ENCODE measurements at regions of chr20 and their contacts with region 1.

Region 1: DNA sequence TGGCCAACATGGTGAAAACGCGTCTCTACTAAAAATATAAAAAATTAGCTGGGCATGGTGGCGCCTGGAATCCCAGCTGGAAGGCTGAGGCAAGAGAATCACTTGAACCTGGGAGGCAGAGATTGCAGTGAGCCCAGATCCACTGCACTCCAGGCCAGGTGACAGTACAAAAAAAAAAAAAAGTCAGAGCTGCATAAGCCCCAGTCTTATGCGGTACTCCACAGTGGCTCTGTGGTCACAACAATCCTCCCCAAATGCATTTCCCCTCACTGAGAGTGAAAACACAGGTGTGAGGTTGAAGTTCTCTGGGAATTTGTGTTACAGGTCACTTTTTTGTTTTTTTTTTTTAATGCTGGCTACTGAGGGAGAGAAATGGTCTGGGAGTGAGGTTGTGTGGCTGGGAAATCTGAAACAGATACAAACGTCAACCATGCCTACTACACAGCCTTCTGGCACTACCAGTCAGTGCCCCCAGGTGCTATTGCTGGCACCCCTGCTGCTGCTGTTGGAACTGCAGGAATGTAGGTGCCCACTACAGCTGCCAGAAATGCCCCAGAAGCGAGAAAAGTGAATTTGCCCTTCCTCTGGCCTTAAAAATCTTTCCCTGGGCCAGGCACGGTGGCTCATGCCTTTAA is 5.7 kb downstream of the MRPS26 start:
- DNase-seq: no peak
- H3K4me3 ChIP-seq: no peak overlapping the region
- H3K27ac ChIP-seq: no peak overlapping the region
- H3K4me1 ChIP-seq: peaks cover 5% of the 10 kb centered on the region
- H3K27me3 ChIP-seq: no peaks in the 10 kb centered on the region
- CTCF ChIP-seq: no peak
- POLR2A ChIP-seq: no peak

Region 2: GRCh38 chr20:3068986-3069900 is 17.7 kb after region 1 on chr20:
- CTCF ChIA-PET with region 1: interaction called, 17 read pairs
- POLR2A ChIA-PET with region 1: interaction called, 3 read pairs
- dilution Hi-C with region 1: no loop called
- intact Hi-C with region 1: no loop called
- DNase-seq: no peak
- H3K4me3 ChIP-seq: no peak overlapping the region
- H3K27ac ChIP-seq: no peak overlapping the region
- H3K4me1 ChIP-seq: no peaks in the 10 kb centered on the region
- H3K27me3 ChIP-seq: peaks cover 1 to 7% of the 10 kb centered on the region in 2 experiments
- CTCF ChIP-seq: peak in 1 of 2 donors; percentile 4
- POLR2A ChIP-seq: no peak

Region 3: DNA sequence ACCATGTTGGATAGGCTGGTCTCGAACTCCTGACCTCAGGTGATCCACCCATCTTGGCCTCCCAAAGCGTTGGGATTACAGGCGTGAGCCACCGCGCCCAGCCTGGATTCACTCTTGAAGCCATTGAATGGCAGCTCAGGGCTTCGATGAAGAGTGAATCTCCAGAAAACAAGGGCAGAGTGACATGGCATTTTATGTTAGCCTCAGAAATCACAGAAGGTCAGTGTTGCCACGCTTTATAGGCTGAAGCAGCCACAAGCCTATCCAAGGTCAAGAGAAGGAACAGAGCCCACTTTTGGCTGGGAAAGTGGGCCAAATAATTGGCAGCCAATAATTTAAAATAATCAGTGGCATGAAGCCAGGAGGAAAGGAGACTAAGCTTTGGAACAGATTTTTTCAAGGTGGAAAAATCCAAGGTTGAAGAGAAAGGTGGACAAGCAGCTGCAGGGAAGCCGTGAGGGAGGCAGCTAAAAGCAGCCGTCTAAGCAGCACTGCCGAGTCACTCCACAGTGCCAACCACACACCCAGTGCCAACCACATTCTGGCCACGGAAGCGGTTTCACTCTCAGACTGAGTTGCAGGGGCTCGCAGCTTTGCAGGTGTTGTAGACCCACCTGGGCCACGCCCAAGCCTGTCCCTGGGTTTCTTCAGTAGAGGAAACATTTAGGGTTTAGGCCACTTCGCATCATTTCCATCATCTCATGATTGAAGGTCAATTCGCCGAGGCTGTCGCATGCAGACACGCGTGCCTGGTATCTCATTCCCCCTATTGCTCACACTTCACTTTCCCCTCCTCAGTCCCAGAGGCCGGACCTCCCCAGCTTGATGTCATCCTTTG is 50.5 kb after region 1 on chr20:
- CTCF ChIA-PET with region 1: interaction called, 16 read pairs
- POLR2A ChIA-PET with region 1: no interaction called
- dilution Hi-C with region 1: no loop called
- intact Hi-C with region 1: no loop called
- DNase-seq: no peak
- H3K4me3 ChIP-seq: no peak overlapping the region
- H3K27ac ChIP-seq: no peak overlapping the region
- H3K4me1 ChIP-seq: no peaks in the 10 kb centered on the region
- H3K27me3 ChIP-seq: no peaks in the 10 kb centered on the region
- CTCF ChIP-seq: no peak
- POLR2A ChIP-seq: no peak

Region 4: DNA sequence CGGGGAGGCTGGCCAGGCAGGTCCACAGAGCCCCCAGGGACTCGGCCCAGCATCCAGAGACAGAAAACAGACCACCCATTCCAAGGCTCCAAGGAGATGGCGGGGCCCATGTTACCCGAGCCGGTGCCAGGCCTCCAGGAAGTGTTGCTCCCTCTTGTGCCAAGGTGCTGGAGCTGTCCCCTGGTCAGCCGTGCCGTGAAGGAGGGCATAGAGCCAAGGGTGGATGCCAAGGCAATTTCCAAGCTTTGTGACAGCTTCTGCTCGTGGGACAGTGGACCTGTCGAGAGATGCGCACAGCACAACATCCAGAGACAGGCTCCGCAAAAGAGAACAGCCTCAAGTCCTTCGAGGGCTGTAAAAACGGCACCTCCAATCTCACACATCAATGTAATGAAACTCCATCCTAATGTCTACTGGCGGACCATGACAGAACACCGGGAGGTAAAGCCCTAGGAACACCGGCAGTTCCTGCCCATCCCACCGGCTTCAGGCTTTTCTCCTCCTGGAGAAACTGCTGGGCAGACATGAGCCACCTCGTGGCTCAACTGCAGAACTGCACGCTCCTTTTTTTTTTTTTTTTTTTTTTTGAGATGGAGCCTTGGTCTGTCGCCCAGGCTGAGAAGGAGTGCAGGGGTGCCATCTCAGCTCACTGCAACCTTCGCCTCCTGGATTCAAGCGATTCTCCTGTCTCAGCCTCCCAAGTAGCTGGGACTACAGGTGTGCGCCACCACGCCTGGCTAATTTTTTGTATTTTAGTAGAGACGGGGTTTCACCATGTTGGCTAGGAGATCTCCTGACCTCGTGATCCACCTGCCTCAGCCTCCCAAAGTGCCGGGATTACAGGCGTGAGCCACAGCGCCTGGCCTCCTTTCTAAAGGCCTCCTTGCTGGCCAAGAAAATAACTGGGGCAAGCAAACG is 63.9 kb after region 1 on chr20:
- CTCF ChIA-PET with region 1: interaction called, 59 read pairs
- POLR2A ChIA-PET with region 1: no interaction called
- dilution Hi-C with region 1: no loop called
- intact Hi-C with region 1: loop called (anchors 1 kb)
- DNase-seq: peak; percentile 44
- H3K4me3 ChIP-seq: no peak overlapping the region
- H3K27ac ChIP-seq: no peak overlapping the region
- H3K4me1 ChIP-seq: no peaks in the 10 kb centered on the region
- H3K27me3 ChIP-seq: no peaks in the 10 kb centered on the region
- CTCF ChIP-seq: peak; percentile 64 to 76
- POLR2A ChIP-seq: no peak

Region 5: DNA sequence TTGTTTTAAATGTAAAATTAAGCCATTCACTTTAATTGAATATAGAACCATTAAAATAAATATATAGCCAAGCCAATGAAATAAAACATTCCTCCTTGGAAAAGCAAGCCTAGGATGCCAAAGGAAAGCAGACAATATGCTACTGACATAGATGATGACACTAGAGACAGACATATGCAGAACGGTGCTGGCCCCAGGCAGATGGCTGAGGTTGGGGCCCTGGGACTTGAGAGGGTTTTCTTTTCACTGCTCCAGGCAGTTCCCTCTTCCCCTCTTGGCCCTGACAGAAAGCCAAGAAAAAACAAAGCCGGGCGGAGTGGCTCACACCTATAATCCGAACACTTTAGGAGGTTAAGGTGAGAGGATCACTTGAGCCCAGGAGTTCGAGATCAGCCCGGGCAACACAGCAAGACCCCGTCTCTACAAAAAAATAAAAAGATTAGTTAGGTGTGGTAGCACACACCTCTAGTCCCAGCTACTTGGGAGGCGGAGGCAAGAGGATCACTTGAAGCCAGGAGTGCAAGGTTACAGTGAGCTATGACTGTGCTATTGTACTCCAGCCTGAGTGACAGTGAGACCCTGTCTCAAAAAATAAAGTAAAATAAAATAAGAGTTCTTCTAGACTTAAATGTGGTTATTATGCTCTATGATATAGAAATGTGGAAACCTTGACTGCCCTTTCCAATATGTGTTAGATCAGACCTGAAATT is 76.9 kb after region 1 on chr20:
- CTCF ChIA-PET with region 1: no interaction called
- POLR2A ChIA-PET with region 1: no interaction called
- dilution Hi-C with region 1: no loop called
- intact Hi-C with region 1: no loop called
- DNase-seq: no peak
- H3K4me3 ChIP-seq: no peak overlapping the region
- H3K27ac ChIP-seq: no peak overlapping the region
- H3K4me1 ChIP-seq: peaks cover 1% of the 10 kb centered on the region
- H3K27me3 ChIP-seq: no peaks in the 10 kb centered on the region
- CTCF ChIP-seq: no peak
- POLR2A ChIP-seq: no peak

Region 6: DNA sequence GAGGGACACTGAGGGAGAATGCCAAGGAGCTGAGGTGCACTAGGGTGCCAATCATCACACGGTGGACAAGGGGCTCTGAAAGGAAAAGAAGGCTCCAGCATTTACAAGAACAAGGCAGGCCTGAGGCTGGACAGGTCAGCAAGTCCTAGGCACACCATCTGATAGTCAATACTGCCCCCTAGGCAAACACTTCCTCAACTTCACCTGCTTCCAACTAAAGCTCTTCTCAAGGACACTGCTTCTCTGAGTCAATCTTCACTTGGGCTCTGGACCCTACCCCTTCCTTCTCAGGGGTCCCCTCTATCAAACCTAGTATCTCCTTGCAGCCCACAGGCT is 225.1 kb after region 1 on chr20:
- CTCF ChIA-PET with region 1: interaction called, 18 read pairs
- POLR2A ChIA-PET with region 1: no interaction called
- dilution Hi-C with region 1: no loop called
- intact Hi-C with region 1: no loop called
- DNase-seq: peak; percentile 37
- H3K4me3 ChIP-seq: no peak overlapping the region
- H3K27ac ChIP-seq: no peak overlapping the region
- H3K4me1 ChIP-seq: no peaks in the 10 kb centered on the region
- H3K27me3 ChIP-seq: no peaks in the 10 kb centered on the region
- CTCF ChIP-seq: peak; percentile 13 to 33
- POLR2A ChIP-seq: no peak

Measured in endothelial cell of umbilical vein (primary cell).